Upper lobe of right lung (tissue), 1 donor: ENCODE measurements at regions of chr19 and their contacts with region 1.

Region 1: DNA sequence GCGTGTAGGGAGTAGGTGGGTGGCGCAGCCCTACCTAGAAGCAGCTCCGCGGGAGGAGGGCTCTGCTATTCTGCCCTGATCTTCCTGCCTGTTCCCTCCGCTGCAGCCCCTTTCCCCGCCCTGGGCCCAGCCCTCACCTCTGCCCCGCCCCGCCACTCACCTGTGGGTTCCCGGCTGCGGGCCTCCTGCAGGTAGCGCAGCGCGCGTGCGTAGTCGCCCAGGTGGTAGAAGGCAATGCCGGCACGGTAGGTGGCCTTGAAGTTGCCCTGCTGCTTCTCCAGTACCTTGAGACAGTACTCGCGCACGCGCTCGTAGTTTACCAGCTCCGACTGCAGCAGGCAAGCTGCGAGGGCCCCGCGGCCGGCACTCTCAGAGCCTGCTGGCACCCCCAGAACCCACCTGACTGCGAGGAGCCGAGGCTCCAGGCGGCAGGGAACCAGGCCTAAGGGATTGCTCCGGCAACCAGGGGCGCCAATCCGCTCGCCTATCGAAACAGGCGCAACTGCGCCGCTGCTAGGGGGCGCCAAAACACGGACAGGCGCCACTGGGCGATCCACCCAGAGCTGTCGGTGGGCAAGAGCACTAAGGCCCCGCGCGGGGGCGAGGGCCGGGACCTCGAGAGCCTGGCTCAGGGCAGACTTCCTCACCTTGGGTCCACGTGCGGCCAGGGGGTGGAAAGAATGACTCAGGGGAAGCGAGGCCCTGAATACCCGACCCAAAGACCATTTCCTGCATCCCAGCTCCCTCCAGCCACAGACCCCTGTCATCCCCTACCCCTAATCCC is 965 bp downstream of the TTC9B start:
- DNase-seq: peak; percentile 82
- ATAC-seq: peak; percentile 36
- H3K4me3 ChIP-seq: no peak overlapping the region
- H3K27ac ChIP-seq: no peak overlapping the region
- H3K4me1 ChIP-seq: no peaks in the 10 kb centered on the region
- H3K27me3 ChIP-seq: peaks cover 29% of the 10 kb centered on the region
- CTCF ChIP-seq: peak; percentile 26

Region 2: GRCh38 chr19:40155749-40156265 is 61.4 kb before region 1 on chr19:
- intact Hi-C with region 1: loop called (anchors 5 kb)
- DNase-seq: peak; percentile 30
- ATAC-seq: peak; percentile 42
- H3K4me3 ChIP-seq: no peak overlapping the region
- H3K27ac ChIP-seq: no peak overlapping the region
- H3K4me1 ChIP-seq: no peaks in the 10 kb centered on the region
- H3K27me3 ChIP-seq: no peaks in the 10 kb centered on the region
- CTCF ChIP-seq: peak; percentile 29

Region 3: GRCh38 chr19:40266119-40266518 is 48.9 kb after region 1 on chr19:
- intact Hi-C with region 1: no loop called
- DNase-seq: no peak
- ATAC-seq: no peak
- H3K4me3 ChIP-seq: no peak overlapping the region
- H3K27ac ChIP-seq: no peak overlapping the region
- H3K4me1 ChIP-seq: no peaks in the 10 kb centered on the region
- H3K27me3 ChIP-seq: no peaks in the 10 kb centered on the region
- CTCF ChIP-seq: no peak